Ovary (tissue), 10 donors: ENCODE measurements at regions of chrX and their contacts with region 1.

Region 1: GRCh38 chrX:27491397-27491796 is 28.3 kb upstream of the PPP4R3C start:
- DNase-seq: no peak
- H3K4me3 ChIP-seq: no peak overlapping the region
- H3K27ac ChIP-seq: no peak overlapping the region
- H3K4me1 ChIP-seq: no peaks in the 10 kb centered on the region
- H3K27me3 ChIP-seq: no peaks in the 10 kb centered on the region
- CTCF ChIP-seq: no peak
- EP300 ChIP-seq: no peak
- POLR2A ChIP-seq: no peak

Region 2: GRCh38 chrX:26873736-26874135 is 617.7 kb before region 1 on chrX:
- intact Hi-C with region 1: no loop called
- DNase-seq: no peak
- H3K4me3 ChIP-seq: no peak overlapping the region
- H3K27ac ChIP-seq: no peak overlapping the region
- H3K4me1 ChIP-seq: no peaks in the 10 kb centered on the region
- H3K27me3 ChIP-seq: no peaks in the 10 kb centered on the region
- CTCF ChIP-seq: no peak
- EP300 ChIP-seq: no peak
- POLR2A ChIP-seq: no peak

Region 3: DNA sequence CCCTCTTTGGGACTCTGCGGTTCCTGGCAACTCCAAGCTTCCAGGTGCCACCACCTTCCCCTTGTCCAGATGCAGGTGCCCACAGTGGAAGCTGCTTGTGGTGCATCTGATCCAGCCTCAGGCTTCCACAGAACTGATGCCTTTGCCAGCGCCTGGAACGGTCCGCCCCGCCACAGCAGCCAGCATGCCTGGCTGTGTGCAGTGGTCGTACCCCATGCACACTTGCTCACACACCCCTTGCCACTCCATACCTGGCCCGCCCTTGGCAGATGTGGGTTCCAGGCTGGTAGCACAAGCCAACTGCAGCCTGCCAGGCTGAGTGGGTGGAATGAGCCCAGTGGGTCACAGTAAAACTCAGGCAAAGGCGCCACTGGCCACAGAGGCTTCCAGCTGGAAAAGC is 268.7 kb before region 1 on chrX:
- intact Hi-C with region 1: no loop called
- DNase-seq: no peak
- H3K4me3 ChIP-seq: no peak overlapping the region
- H3K27ac ChIP-seq: no peak overlapping the region
- H3K4me1 ChIP-seq: no peaks in the 10 kb centered on the region
- H3K27me3 ChIP-seq: no peaks in the 10 kb centered on the region
- CTCF ChIP-seq: no peak
- EP300 ChIP-seq: no peak
- POLR2A ChIP-seq: no peak

Region 4: GRCh38 chrX:27462956-27463586 is 28.3 kb before region 1 on chrX and contains the start of gene PPP4R3C:
- intact Hi-C with region 1: no loop called
- DNase-seq: no peak
- H3K4me3 ChIP-seq: no peak within 1 kb of the TSS
- H3K27ac ChIP-seq: no peak within 1 kb of the TSS
- H3K4me1 ChIP-seq: no peaks in the 10 kb centered on the region
- H3K27me3 ChIP-seq: no peaks in the 10 kb centered on the region
- CTCF ChIP-seq: no peak
- EP300 ChIP-seq: no peak
- POLR2A ChIP-seq: no peak
- total RNA-seq, gene PPP4R3C: not detected

Region 5: DNA sequence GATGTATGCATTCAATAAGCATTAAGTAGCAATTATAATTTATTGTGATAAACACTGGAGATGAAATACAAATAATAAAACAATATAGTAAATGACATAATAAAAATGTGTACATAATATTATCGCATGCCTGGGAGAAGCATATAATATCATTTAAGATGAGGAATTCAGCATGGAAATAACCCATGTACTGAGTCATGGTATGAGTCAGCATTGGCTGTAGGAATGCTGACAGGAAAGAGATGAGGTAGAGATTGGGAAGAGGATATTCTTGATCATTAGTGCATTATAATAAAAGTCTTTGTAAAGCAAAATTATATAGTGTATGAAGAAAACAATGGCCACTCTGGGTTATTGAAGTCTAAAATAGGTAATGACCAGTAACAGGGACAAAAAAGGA is 399.2 kb after region 1 on chrX:
- intact Hi-C with region 1: loop called in 1 of 4 experiments (anchors 5 kb)
- DNase-seq: no peak
- H3K4me3 ChIP-seq: no peak overlapping the region
- H3K27ac ChIP-seq: no peak overlapping the region
- H3K4me1 ChIP-seq: no peaks in the 10 kb centered on the region
- H3K27me3 ChIP-seq: no peaks in the 10 kb centered on the region
- CTCF ChIP-seq: no peak
- EP300 ChIP-seq: no peak
- POLR2A ChIP-seq: no peak